BJ (cell line): ENCODE measurements at regions of chr11 and their contacts with region 1.

Region 1: GRCh38 chr11:35822815-35823495 is 120.9 kb upstream of the LDLRAD3 start:
- DNase-seq: no peak
- H3K4me3 ChIP-seq: no peak overlapping the region
- H3K27me3 ChIP-seq: no peaks in the 10 kb centered on the region; the same call in 1 of the 2 replicates
- CTCF ChIP-seq: no peak

Region 2: DNA sequence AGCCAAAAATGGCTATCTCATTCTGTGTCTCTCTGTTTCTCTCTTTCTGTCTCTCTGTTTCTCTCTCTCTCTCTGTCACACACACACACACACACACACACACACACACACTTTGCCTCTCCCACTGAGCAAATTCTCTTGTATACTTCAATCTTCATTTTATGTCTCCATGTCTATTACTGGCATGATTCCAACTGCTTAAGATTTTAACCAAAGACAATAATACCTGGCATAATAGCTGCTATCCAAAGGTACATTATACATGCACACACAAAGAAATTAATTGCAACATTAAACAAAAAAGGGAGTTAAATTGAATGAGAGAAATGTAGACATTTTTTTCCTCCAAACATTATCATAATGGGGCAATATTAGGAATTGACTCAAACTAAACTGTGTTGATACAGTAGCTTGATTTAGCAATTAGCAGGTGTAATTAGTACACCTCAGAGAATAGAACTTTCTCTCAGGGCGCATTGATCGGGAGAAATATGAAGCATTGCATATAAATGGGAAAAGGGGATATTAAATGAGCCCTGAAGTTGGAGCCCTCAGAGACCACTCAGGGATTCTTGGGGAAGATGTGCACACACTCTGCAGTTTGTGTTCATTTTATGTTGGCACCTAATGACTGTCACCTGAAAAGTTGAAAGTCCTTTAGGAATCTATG is 386.2 kb before region 1 on chr11:
- CTCF ChIA-PET with region 1: no interaction called
- POLR2A ChIA-PET with region 1: no interaction called
- DNase-seq: no peak
- H3K4me3 ChIP-seq: no peak overlapping the region
- H3K27me3 ChIP-seq: no peaks in the 10 kb centered on the region
- CTCF ChIP-seq: no peak

Region 3: DNA sequence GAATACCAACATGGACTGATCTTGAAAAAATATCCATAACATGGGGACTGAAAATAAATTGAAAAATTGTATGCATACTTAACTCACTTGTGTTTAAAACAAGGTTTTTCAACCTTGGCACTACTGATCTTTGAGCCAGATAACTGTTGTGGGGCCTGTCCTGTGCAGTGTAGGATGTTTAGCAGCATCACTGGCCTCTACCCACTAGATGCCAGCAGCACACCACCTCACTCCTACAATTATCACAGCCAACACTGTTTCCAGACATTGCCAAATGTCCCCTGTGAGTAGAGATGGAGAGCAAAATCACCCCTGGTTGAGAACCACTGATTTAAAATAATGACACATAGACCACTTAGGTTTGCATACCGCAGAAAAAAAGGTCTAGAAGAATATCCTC is 358.6 kb before region 1 on chr11:
- CTCF ChIA-PET with region 1: no interaction called
- POLR2A ChIA-PET with region 1: no interaction called
- DNase-seq: no peak
- H3K4me3 ChIP-seq: no peak overlapping the region
- H3K27me3 ChIP-seq: no peaks in the 10 kb centered on the region
- CTCF ChIP-seq: peak; percentile 21; the same call in 1 of the 2 replicates

Region 4: GRCh38 chr11:35617687-35618496 is 205.1 kb before region 1 on chr11 and contains the start of gene FJX1:
- CTCF ChIA-PET with region 1: interaction called, 15 read pairs
- POLR2A ChIA-PET with region 1: no interaction called
- DNase-seq: peak; percentile 51
- H3K4me3 ChIP-seq: peak within 1 kb of the TSS; percentile 58
- H3K27me3 ChIP-seq: no peaks in the 10 kb centered on the region
- CTCF ChIP-seq: no peak
- polyA plus RNA-seq, gene FJX1: 4.8 and 6.1 TPM in 2 replicates

Region 5: GRCh38 chr11:35800970-35801953 is 21.7 kb before region 1 on chr11:
- CTCF ChIA-PET with region 1: interaction called, 20 read pairs
- POLR2A ChIA-PET with region 1: no interaction called
- DNase-seq: no peak
- H3K4me3 ChIP-seq: no peak overlapping the region
- H3K27me3 ChIP-seq: no peaks in the 10 kb centered on the region
- CTCF ChIP-seq: no peak

Region 6: GRCh38 chr11:35842958-35843357 is 20.0 kb after region 1 on chr11:
- CTCF ChIA-PET with region 1: interaction called, 10 read pairs
- POLR2A ChIA-PET with region 1: no interaction called
- DNase-seq: no peak
- H3K4me3 ChIP-seq: no peak overlapping the region
- H3K27me3 ChIP-seq: peaks cover 13% of the 10 kb centered on the region
- CTCF ChIP-seq: no peak

Region 7: GRCh38 chr11:36205536-36205935 is 382.6 kb after region 1 on chr11:
- CTCF ChIA-PET with region 1: no interaction called
- POLR2A ChIA-PET with region 1: no interaction called
- DNase-seq: no peak
- H3K4me3 ChIP-seq: no peak overlapping the region
- H3K27me3 ChIP-seq: no peaks in the 10 kb centered on the region
- CTCF ChIP-seq: no peak

Region 8: GRCh38 chr11:36258730-36259360 is 435.9 kb after region 1 on chr11:
- CTCF ChIA-PET with region 1: interaction called, 21 read pairs
- POLR2A ChIA-PET with region 1: no interaction called
- DNase-seq: no peak
- H3K4me3 ChIP-seq: no peak overlapping the region
- H3K27me3 ChIP-seq: peaks cover 2% of the 10 kb centered on the region
- CTCF ChIP-seq: peak; percentile 78

Region 9: GRCh38 chr11:36333897-36334296 is 510.9 kb after region 1 on chr11:
- CTCF ChIA-PET with region 1: no interaction called
- POLR2A ChIA-PET with region 1: no interaction called
- DNase-seq: no peak
- H3K4me3 ChIP-seq: no peak overlapping the region
- H3K27me3 ChIP-seq: no peaks in the 10 kb centered on the region
- CTCF ChIP-seq: no peak